Gastrocnemius medialis (tissue), 4 donors: ENCODE measurements at regions of chr6 and their contacts with region 1.

Region 1: DNA sequence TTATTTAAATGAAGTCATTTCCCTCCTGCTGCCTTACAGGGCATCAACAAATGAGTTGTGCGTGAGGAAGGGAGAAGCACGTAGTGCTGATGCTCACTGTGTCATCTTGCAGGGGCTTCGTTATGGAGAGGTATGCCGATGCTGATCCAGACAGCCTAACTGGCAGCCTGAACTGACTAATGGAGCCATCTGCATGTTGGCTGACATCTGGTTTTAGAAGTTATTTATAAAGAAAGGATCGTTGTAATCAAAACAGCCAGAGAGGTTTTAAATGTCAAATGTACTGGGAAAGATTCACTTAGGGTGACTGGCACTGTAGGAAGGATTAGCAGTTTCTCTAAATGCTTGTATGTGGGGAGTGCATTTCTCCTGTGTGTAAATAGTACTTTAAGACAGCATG is 54.6 kb downstream of the FARS2 start:
- DNase-seq: peak in 1 of 2 donors; percentile 6
- ATAC-seq: peak; percentile 96 to 99
- H3K4me3 ChIP-seq: peak overlapping the region in 2 of 4 donors; percentile 23 to 26
- H3K27ac ChIP-seq: peak overlapping the region; percentile 10 to 66 (median 54)
- H3K4me1 ChIP-seq: peaks cover 24 to 27% of the 10 kb centered on the region in 2 donors
- H3K27me3 ChIP-seq: no peaks in the 10 kb centered on the region
- CTCF ChIP-seq: no peak
- POLR2A ChIP-seq: no peak

Region 2: DNA sequence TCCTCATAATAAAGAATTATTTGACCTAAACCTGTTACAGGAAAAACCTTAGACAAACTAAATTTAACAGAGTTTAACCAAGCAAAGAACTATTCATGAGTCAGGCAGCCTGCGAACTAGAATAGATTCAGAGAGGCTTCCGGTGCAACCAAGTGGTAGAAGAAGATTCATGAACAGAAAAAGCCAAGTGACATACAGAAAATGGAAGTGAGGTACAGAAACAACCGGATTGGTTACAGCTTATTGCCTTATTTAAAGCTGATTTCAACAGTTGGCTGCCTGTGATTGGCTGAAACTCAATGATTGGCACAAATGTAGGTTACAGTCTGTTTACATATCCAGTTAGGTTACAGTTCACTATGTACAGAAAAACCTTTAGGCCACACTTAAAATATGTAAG is 220.6 kb before region 1 on chr6:
- in situ Hi-C with region 1: no loop called
- intact Hi-C with region 1: no loop called
- DNase-seq: no peak
- ATAC-seq: no peak
- H3K4me3 ChIP-seq: no peak overlapping the region
- H3K27ac ChIP-seq: no peak overlapping the region
- H3K4me1 ChIP-seq: no peaks in the 10 kb centered on the region
- H3K27me3 ChIP-seq: no peaks in the 10 kb centered on the region
- CTCF ChIP-seq: no peak
- POLR2A ChIP-seq: no peak

Region 3: GRCh38 chr6:5234874-5235273 is 81.0 kb before region 1 on chr6:
- in situ Hi-C with region 1: no loop called
- intact Hi-C with region 1: no loop called
- DNase-seq: no peak
- ATAC-seq: no peak
- H3K4me3 ChIP-seq: no peak overlapping the region
- H3K27ac ChIP-seq: no peak overlapping the region
- H3K4me1 ChIP-seq: peaks cover 10 to 15% of the 10 kb centered on the region in 2 donors
- H3K27me3 ChIP-seq: no peaks in the 10 kb centered on the region
- CTCF ChIP-seq: no peak
- POLR2A ChIP-seq: no peak

Region 4: GRCh38 chr6:5389086-5389745 is 73.3 kb after region 1 on chr6:
- in situ Hi-C with region 1: no loop called
- intact Hi-C with region 1: loop called (anchors 5 kb)
- DNase-seq: no peak
- ATAC-seq: peak; percentile 40 to 60
- H3K4me3 ChIP-seq: no peak overlapping the region
- H3K27ac ChIP-seq: peak overlapping the region in 2 of 4 donors; percentile 47 to 55
- H3K4me1 ChIP-seq: peaks cover 21 to 22% of the 10 kb centered on the region in 2 donors
- H3K27me3 ChIP-seq: no peaks in the 10 kb centered on the region
- CTCF ChIP-seq: no peak
- POLR2A ChIP-seq: no peak